ENCODE measurements at regions of chr10 and their contacts with region 1.

Region 1: GRCh38 chr10:72273410-72274212 is at the start of gene DDIT4:
- DNase-seq: peak; percentile 99
- ATAC-seq: peak; percentile 57 to 85
- H3K4me3 ChIP-seq: peak within 1 kb of the TSS; percentile 84
- H3K27ac ChIP-seq: peak within 1 kb of the TSS; percentile 98 to 100
- H3K4me1 ChIP-seq: peaks cover 52% of the 10 kb centered on the region
- CTCF ChIP-seq: no peak
- EP300 ChIP-seq: 0 out of 5 replicates have a peak, but pooled peaks of 1 of the 2 experiments have one; percentile 35
- POLR2A ChIP-seq: peak; percentile 100
- RAD21 ChIP-seq: peak in 1 of 2 experiments; percentile 8; a peak in 3 of 5 replicates
- polyA plus RNA-seq, gene DDIT4: 329 and 392 TPM in 2 replicates

Region 2: DNA sequence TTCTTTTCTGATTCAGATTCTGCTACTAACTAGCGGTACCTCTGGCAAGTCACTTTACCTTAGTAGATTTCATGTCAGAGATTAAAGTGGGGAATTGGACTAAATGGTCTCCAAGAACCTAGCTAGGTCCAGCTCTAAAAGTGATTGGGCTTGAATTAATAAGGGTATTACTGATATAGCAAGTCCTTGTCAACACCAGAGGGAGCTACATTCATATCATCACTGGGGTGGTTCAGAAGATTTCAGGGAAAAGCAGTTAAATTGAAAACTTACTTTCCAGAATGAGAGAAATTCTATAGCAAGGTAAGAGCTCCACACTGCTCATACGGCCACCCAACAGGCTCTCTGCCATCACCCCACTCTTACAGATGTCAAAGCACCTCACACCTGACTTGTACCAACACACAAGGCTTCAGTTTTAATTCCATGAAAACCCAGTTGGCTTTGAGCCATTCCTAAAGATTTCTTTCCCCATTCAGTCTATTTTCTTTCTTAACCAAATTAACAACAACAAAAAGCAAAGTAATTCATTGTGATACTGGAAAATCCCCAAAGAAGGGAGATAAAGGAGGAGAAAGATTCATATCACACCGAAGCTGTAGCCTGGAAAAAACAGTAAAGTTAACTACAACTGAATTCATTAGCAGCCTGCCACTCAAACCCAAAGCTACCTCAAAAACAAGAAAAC is 147.3 kb before region 1 on chr10:
- CTCF ChIA-PET with region 1: interaction called, 6 read pairs
- POLR2A ChIA-PET with region 1: interaction called, 10 read pairs
- DNase-seq: peak; percentile 58 to 73
- ATAC-seq: peak; percentile 62 to 84; a peak in 5 of 6 replicates
- H3K4me3 ChIP-seq: no peak overlapping the region
- H3K27ac ChIP-seq: peak overlapping the region; percentile 51 to 65
- H3K4me1 ChIP-seq: peaks cover 39% of the 10 kb centered on the region; the same call in 2 of the 3 replicates
- CTCF ChIP-seq: peak; percentile 85
- EP300 ChIP-seq: no peak
- POLR2A ChIP-seq: no peak
- RAD21 ChIP-seq: peak; percentile 85 to 88

Region 3: GRCh38 chr10:72235544-72236279 is 37.9 kb before region 1 on chr10:
- CTCF ChIA-PET with region 1: interaction called, 11 read pairs
- POLR2A ChIA-PET with region 1: interaction called, 15 read pairs
- DNase-seq: no peak
- ATAC-seq: no peak
- H3K4me3 ChIP-seq: no peak overlapping the region
- H3K27ac ChIP-seq: no peak overlapping the region
- H3K4me1 ChIP-seq: peaks cover 9% of the 10 kb centered on the region; the same call in 2 of the 3 replicates
- CTCF ChIP-seq: no peak
- EP300 ChIP-seq: no peak
- POLR2A ChIP-seq: no peak
- RAD21 ChIP-seq: no peak

Region 4: DNA sequence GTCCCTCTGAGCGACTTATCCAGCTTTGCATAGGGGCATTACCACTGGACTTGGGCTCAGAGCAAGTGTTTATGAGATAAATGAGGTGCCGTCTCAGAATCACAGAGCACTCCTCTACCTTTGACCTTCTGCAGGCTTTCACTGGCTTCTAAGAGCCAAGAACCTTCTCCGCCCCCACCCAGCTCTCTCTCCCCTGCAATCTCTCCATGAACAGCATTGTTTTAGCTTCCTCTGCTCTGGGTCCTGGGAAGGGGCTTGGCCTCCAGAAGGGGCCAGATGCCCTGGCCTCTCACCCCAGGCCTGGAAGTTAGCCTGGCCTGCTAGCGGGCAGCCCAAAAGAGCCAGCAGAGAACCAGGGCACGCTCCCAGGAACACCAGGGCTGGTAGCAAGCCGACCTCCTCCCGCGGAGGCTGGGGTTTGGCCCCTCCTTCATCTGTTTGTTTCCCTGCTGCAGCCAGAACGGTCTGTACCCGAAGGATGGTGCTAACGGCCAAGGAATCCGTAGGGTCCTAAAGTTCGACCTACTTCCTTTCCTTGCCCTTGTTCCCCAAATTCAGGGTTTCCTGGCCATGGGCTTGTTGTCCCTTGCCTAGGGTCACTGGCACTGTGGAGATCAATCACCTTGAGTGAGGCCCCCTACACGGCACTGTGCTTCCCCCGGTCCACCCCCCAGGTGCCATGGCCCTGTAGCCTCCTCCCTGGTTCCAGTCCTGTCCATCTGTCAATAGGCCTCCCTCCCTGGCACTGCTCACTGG is 18.6 kb before region 1 on chr10:
- CTCF ChIA-PET with region 1: interaction called, 29 read pairs
- POLR2A ChIA-PET with region 1: interaction called, 155 read pairs
- DNase-seq: peak; percentile 87 to 94
- ATAC-seq: peak; percentile 91 to 92
- H3K4me3 ChIP-seq: no peak overlapping the region
- H3K27ac ChIP-seq: peak overlapping the region; percentile 99 to 100
- H3K4me1 ChIP-seq: peaks cover 69% of the 10 kb centered on the region
- CTCF ChIP-seq: no peak
- EP300 ChIP-seq: no peak
- POLR2A ChIP-seq: peak; percentile 58
- RAD21 ChIP-seq: peak; percentile 53 to 54

Region 5: GRCh38 chr10:72292223-72292691 is 18.6 kb after region 1 on chr10:
- CTCF ChIA-PET with region 1: interaction called, 46 read pairs
- POLR2A ChIA-PET with region 1: interaction called, 126 read pairs
- DNase-seq: peak in 1 of 2 experiments; percentile 76
- ATAC-seq: peak; percentile 31 to 74
- H3K4me3 ChIP-seq: no peak overlapping the region
- H3K27ac ChIP-seq: peak overlapping the region; percentile 98 to 100
- H3K4me1 ChIP-seq: peaks cover 55% of the 10 kb centered on the region
- CTCF ChIP-seq: no peak
- EP300 ChIP-seq: peak in 1 of 2 experiments; percentile 33; a peak in 2 of 5 replicates
- POLR2A ChIP-seq: no peak
- RAD21 ChIP-seq: no peak

Region 6: GRCh38 chr10:72319416-72320254 is 46.0 kb after region 1 on chr10:
- CTCF ChIA-PET with region 1: interaction called, 94 read pairs
- POLR2A ChIA-PET with region 1: interaction called, 197 read pairs
- DNase-seq: peak; percentile 73 to 94
- ATAC-seq: peak; percentile 54 to 66
- H3K4me3 ChIP-seq: peak overlapping the region; percentile 27
- H3K27ac ChIP-seq: peak overlapping the region; percentile 98 to 99
- H3K4me1 ChIP-seq: peaks cover 92% of the 10 kb centered on the region
- CTCF ChIP-seq: no peak
- EP300 ChIP-seq: peak; percentile 93 to 98; a peak in 4 of 5 replicates
- POLR2A ChIP-seq: no peak
- RAD21 ChIP-seq: peak in 1 of 2 experiments; percentile 58; a peak in 3 of 5 replicates

Region 7: DNA sequence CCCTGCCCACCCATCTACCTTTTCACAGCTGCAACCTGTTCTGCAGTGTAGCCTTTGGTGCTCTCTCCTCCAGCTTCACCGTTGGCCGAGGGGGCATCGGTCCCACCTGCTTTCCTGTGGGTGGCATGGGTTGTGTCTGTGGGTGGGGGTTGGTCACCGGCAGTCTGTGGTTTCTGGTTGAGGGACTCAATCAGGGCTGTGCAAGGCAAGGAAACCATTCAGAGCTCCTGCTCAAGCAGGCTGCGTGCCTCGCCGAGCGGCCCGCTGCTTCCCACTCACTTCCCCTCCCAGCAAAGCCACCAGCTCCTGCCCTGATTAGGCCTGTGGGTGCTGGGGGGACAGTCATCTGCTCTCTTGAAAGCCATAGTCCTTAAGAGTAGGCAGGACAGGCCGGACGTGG is 71.3 kb after region 1 on chr10:
- CTCF ChIA-PET with region 1: interaction called, 79 read pairs
- POLR2A ChIA-PET with region 1: interaction called, 3 read pairs
- DNase-seq: no peak
- ATAC-seq: no peak
- H3K4me3 ChIP-seq: no peak overlapping the region
- H3K27ac ChIP-seq: no peak overlapping the region
- H3K4me1 ChIP-seq: peaks cover 4% of the 10 kb centered on the region
- CTCF ChIP-seq: no peak
- EP300 ChIP-seq: no peak
- POLR2A ChIP-seq: no peak
- RAD21 ChIP-seq: no peak

Measured in A549 (cell line).